ENCODE measurements at regions of chr14 and their contacts with region 1.

Region 1: DNA sequence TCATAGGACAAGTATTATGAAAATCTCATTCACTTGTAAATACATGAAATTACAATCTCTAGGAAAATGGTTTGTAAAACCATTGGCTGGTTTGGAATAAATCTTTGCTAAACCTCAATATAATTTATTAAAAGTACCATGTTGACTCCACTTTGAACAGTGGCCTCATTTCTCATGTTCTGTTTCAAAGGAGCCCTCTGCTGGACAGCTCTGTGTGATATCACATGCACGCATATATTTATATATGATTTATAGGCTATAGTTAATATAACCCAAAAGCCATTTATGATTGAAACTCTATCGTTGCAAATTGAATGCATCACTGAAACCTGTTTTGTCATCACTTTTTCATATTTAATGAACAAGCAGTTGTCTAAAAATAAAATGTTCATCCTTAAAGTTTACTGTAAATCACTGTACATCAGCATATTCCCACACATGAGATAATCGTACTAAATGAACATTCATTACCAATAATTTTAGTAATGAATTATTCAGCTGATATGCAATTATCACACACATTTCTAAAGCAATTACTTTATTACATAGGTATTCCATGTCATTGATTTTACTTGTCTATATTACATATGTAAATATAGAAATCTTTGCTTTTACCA is 493.8 kb downstream of the NPAS3 start:
- DNase-seq: peak in 1 of 2 experiments; percentile 10
- H3K4me3 ChIP-seq: no peak overlapping the region
- H3K4me3 Mint-ChIP-seq: no peak overlapping the region
- H3K27ac Mint-ChIP-seq: no peak overlapping the region
- H3K4me1 ChIP-seq: no peaks in the 10 kb centered on the region
- H3K4me1 Mint-ChIP-seq: no peaks in the 10 kb centered on the region
- H3K27me3 ChIP-seq: no peaks in the 10 kb centered on the region
- H3K27me3 Mint-ChIP-seq: peaks cover 5% of the 10 kb centered on the region
- CTCF ChIP-seq: peak; percentile 28 to 39

Region 2: GRCh38 chr14:33184587-33184986 is 247.9 kb before region 1 on chr14:
- CTCF ChIA-PET with region 1: no interaction called
- POLR2A ChIA-PET with region 1: no interaction called
- intact Hi-C with region 1: loop called (anchors 2 kb)
- DNase-seq: no peak
- H3K4me3 ChIP-seq: no peak overlapping the region
- H3K4me3 Mint-ChIP-seq: no peak overlapping the region
- H3K27ac Mint-ChIP-seq: no peak overlapping the region
- H3K4me1 ChIP-seq: no peaks in the 10 kb centered on the region
- H3K4me1 Mint-ChIP-seq: no peaks in the 10 kb centered on the region
- H3K27me3 ChIP-seq: no peaks in the 10 kb centered on the region
- H3K27me3 Mint-ChIP-seq: peaks cover 4% of the 10 kb centered on the region
- CTCF ChIP-seq: no peak

Region 3: DNA sequence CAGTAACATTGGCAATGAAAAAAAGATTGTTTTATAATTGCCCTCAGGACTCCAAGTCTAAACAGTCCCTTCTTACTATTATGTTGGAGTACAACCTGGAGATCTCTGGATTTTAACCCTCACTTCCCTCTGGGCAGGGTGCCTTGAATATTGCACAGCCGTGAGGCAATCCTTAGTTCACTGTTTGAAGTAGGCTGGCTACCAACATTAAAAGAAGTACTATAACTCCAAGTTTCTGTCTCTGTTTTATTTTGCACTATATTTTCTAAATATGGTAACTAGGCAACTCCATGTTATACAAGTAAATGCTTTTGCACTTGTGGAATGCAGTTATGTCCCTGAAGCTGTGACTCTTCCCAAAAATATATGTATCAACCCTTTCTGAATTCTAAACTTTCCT is 27.6 kb after region 1 on chr14:
- CTCF ChIA-PET with region 1: no interaction called
- POLR2A ChIA-PET with region 1: no interaction called
- intact Hi-C with region 1: no loop called
- DNase-seq: no peak
- H3K4me3 ChIP-seq: no peak overlapping the region
- H3K4me3 Mint-ChIP-seq: no peak overlapping the region
- H3K27ac Mint-ChIP-seq: no peak overlapping the region
- H3K4me1 ChIP-seq: no peaks in the 10 kb centered on the region
- H3K4me1 Mint-ChIP-seq: no peaks in the 10 kb centered on the region
- H3K27me3 ChIP-seq: no peaks in the 10 kb centered on the region
- H3K27me3 Mint-ChIP-seq: peaks cover 9% of the 10 kb centered on the region
- CTCF ChIP-seq: no peak

Region 4: GRCh38 chr14:33475623-33476022 is 43.1 kb after region 1 on chr14:
- CTCF ChIA-PET with region 1: no interaction called
- POLR2A ChIA-PET with region 1: no interaction called
- intact Hi-C with region 1: no loop called
- DNase-seq: peak; percentile 44 to 48
- H3K4me3 ChIP-seq: no peak overlapping the region
- H3K4me3 Mint-ChIP-seq: no peak overlapping the region
- H3K27ac Mint-ChIP-seq: no peak overlapping the region
- H3K4me1 ChIP-seq: no peaks in the 10 kb centered on the region
- H3K4me1 Mint-ChIP-seq: no peaks in the 10 kb centered on the region
- H3K27me3 ChIP-seq: no peaks in the 10 kb centered on the region; the same call in 1 of the 2 replicates
- H3K27me3 Mint-ChIP-seq: peaks cover 20% of the 10 kb centered on the region
- CTCF ChIP-seq: peak; percentile 30 to 44

Region 5: DNA sequence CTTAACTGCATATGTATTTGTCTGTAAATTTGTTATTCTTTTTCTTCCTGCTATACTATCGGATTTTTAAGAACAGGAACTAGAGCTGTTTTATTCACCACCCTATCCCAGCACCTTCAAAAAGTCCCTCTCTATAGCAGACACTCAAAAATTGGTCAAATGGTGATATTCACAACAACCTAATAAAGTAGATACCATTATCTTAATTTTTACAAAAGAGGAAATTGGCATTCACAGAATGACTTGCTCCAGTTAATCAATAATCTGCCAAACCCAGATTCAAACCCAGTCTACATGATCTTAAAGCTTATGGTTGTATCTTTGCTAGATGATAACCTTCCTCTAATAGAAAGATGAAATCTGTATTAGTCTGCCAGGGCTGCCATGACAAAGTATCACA is 91.7 kb after region 1 on chr14:
- CTCF ChIA-PET with region 1: no interaction called
- POLR2A ChIA-PET with region 1: no interaction called
- intact Hi-C with region 1: no loop called
- DNase-seq: no peak
- H3K4me3 ChIP-seq: no peak overlapping the region
- H3K4me3 Mint-ChIP-seq: no peak overlapping the region
- H3K27ac Mint-ChIP-seq: no peak overlapping the region
- H3K4me1 ChIP-seq: no peaks in the 10 kb centered on the region
- H3K4me1 Mint-ChIP-seq: no peaks in the 10 kb centered on the region
- H3K27me3 ChIP-seq: no peaks in the 10 kb centered on the region; the same call in 1 of the 2 replicates
- H3K27me3 Mint-ChIP-seq: peaks cover 16% of the 10 kb centered on the region
- CTCF ChIP-seq: no peak

Measured in Caco-2 (cell line).